CD8-positive, alpha-beta T cell (primary cell): ENCODE measurements at regions of chr20 and their contacts with region 1.

Region 1: GRCh38 chr20:49676581-49677291 is 36.9 kb downstream of the B4GALT5 start:
- DNase-seq: peak in 8 of 9 experiments; percentile 13 to 88 (median 44)
- ATAC-seq: peak; percentile 78
- H3K4me3 ChIP-seq: no peak overlapping the region
- H3K4me3 Mint-ChIP-seq: peak overlapping the region; percentile 26
- H3K27ac ChIP-seq: peak overlapping the region; percentile 25 to 72
- H3K27ac Mint-ChIP-seq: peak overlapping the region; percentile 89
- H3K4me1 ChIP-seq: peaks cover 33% of the 10 kb centered on the region
- H3K4me1 Mint-ChIP-seq: peaks cover 71% of the 10 kb centered on the region
- H3K27me3 ChIP-seq: no peaks in the 10 kb centered on the region
- H3K27me3 Mint-ChIP-seq: no peaks in the 10 kb centered on the region
- CTCF ChIP-seq: no peak

Region 2: GRCh38 chr20:49140834-49141233 is 535.9 kb before region 1 on chr20:
- CTCF ChIA-PET with region 1: no interaction called
- POLR2A ChIA-PET with region 1: no interaction called
- intact Hi-C with region 1: loop called in 1 of 2 experiments (anchors 10 kb)
- DNase-seq: no peak
- ATAC-seq: no peak
- H3K4me3 ChIP-seq: no peak overlapping the region
- H3K4me3 Mint-ChIP-seq: no peak overlapping the region
- H3K27ac ChIP-seq: no peak overlapping the region
- H3K27ac Mint-ChIP-seq: no peak overlapping the region
- H3K4me1 ChIP-seq: no peaks in the 10 kb centered on the region
- H3K4me1 Mint-ChIP-seq: peaks cover 20% of the 10 kb centered on the region
- H3K27me3 ChIP-seq: no peaks in the 10 kb centered on the region
- H3K27me3 Mint-ChIP-seq: no peaks in the 10 kb centered on the region
- CTCF ChIP-seq: no peak

Region 3: GRCh38 chr20:49691818-49692568 is 15.3 kb after region 1 on chr20:
- CTCF ChIA-PET with region 1: interaction called, 7 read pairs
- POLR2A ChIA-PET with region 1: no interaction called
- intact Hi-C with region 1: loop called in 1 of 2 experiments (anchors 2 kb)
- DNase-seq: no peak
- ATAC-seq: no peak
- H3K4me3 ChIP-seq: no peak overlapping the region
- H3K4me3 Mint-ChIP-seq: no peak overlapping the region
- H3K27ac ChIP-seq: no peak overlapping the region
- H3K27ac Mint-ChIP-seq: peak overlapping the region; percentile 46
- H3K4me1 ChIP-seq: no peaks in the 10 kb centered on the region
- H3K4me1 Mint-ChIP-seq: peaks cover 39% of the 10 kb centered on the region
- H3K27me3 ChIP-seq: no peaks in the 10 kb centered on the region
- H3K27me3 Mint-ChIP-seq: no peaks in the 10 kb centered on the region
- CTCF ChIP-seq: no peak

Region 4: DNA sequence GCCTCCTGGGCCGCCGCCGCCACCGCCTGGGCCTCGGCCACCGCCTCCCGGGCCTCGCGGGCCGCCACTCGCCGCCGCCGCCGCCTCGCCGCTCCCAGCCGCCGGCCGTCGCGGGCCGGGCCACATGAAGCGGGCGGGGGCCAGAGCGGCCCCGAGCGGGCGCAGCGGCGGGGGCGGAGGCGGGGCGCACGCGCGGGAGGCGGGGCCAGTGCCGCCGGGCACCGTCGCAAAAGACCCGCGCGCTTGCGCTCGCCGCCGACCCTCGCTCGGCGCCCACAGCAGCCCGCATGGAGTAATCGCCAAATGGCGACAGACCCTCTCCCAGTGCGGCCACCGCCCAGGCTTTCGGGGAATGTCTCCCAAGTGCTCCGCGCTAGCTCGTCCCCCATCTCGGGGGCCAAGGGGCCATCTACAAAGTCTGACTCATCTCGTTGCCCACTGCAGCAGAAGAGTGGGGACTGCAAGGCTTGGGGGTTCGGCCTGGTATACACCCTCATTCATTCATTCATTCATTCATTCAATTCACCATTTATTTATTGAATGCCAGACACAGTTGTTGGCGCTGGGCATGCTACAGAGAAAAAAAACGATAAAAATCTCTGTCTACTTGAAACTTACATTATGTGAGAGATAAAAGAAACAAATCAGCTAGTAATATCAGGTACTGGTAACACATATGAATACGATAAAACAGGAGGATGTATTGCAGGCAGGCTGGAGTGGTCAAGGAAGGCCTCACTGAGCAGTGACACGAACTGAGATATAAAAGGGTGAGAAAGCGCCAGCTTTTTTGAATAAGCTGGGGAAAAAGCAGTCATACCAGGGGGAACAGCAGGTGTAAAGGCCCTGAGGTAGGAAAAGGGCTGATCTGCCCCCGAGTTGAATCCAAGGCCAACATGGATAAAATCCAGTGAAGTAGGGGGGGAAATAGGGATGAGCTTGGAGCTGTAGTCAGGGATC is 37.3 kb after region 1 on chr20 and contains the start of gene B4GALT5:
- CTCF ChIA-PET with region 1: interaction called, 3 read pairs
- POLR2A ChIA-PET with region 1: interaction called, 4 read pairs
- intact Hi-C with region 1: loop called in 1 of 2 experiments (anchors 1 kb)
- DNase-seq: peak; percentile 26 to 83 (median 59)
- ATAC-seq: peak; percentile 85
- H3K4me3 ChIP-seq: peak within 1 kb of the TSS; percentile 79 to 86
- H3K4me3 Mint-ChIP-seq: peak within 1 kb of the TSS; percentile 94
- H3K27ac ChIP-seq: peak within 1 kb of the TSS; percentile 51 to 75
- H3K27ac Mint-ChIP-seq: peak within 1 kb of the TSS; percentile 87
- H3K4me1 ChIP-seq: peaks cover 32% of the 10 kb centered on the region
- H3K4me1 Mint-ChIP-seq: peaks cover 49% of the 10 kb centered on the region
- H3K27me3 ChIP-seq: no peaks in the 10 kb centered on the region
- H3K27me3 Mint-ChIP-seq: no peaks in the 10 kb centered on the region
- CTCF ChIP-seq: no peak
- total RNA-seq, gene B4GALT5: 7.8 to 7.9 TPM

Region 5: GRCh38 chr20:50020288-50020687 is 343.6 kb after region 1 on chr20:
- CTCF ChIA-PET with region 1: no interaction called
- POLR2A ChIA-PET with region 1: no interaction called
- intact Hi-C with region 1: no loop called
- DNase-seq: peak in 1 of 9 experiments; percentile 12
- ATAC-seq: no peak
- H3K4me3 ChIP-seq: no peak overlapping the region
- H3K4me3 Mint-ChIP-seq: no peak overlapping the region
- H3K27ac ChIP-seq: no peak overlapping the region
- H3K27ac Mint-ChIP-seq: no peak overlapping the region
- H3K4me1 ChIP-seq: no peaks in the 10 kb centered on the region
- H3K4me1 Mint-ChIP-seq: no peaks in the 10 kb centered on the region
- H3K27me3 ChIP-seq: no peaks in the 10 kb centered on the region
- H3K27me3 Mint-ChIP-seq: peaks cover 13% of the 10 kb centered on the region
- CTCF ChIP-seq: no peak